Heart right ventricle (tissue), 16 donors: ENCODE measurements at regions of chr3 and their contacts with region 1.

Region 1: DNA sequence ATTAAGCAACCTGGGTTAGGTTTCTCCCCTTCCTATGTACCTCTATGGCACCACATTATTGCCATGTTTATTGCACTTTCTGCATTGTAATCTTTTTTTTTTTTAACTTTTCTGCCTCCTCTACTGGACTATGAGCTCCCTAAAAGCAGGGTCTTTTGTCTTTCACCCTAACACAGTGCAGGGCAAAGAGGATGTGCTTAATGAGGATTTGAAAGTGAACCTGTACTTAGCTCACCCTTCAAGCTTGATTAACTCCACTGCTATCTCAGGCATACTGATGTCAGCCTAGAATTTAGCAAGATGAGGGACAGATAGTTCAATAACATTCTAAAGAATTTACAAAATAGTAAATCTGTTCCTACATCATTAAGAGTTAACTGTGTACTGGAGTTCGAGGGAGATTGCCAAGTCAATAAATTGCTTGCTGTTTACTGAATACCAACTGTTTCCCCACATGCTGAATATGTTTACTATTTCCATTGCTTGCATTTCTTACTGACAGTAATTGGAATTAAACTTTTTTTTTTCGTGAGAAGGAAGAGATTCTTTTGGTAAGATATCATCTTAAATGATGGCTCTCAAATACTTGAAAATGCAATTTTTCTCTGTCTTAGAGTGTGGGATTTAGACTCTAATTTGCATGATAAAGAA is 15.7 kb upstream of the PPARG start:
- DNase-seq: no peak
- ATAC-seq: no peak
- H3K4me3 ChIP-seq: no peak overlapping the region
- H3K27ac ChIP-seq: no peak overlapping the region
- H3K4me1 ChIP-seq: peaks cover 0 to 12% (median 0%) of the 10 kb centered on the region in 9 donors
- H3K27me3 ChIP-seq: no peaks in the 10 kb centered on the region
- CTCF ChIP-seq: no peak

Region 2: GRCh38 chr3:12073106-12073505 is 200.1 kb before region 1 on chr3:
- intact Hi-C with region 1: no loop called
- DNase-seq: no peak
- ATAC-seq: no peak
- H3K4me3 ChIP-seq: no peak overlapping the region
- H3K27ac ChIP-seq: no peak overlapping the region
- H3K4me1 ChIP-seq: no peaks in the 10 kb centered on the region
- H3K27me3 ChIP-seq: peaks cover 0 to 9% (median 0%) of the 10 kb centered on the region in 7 donors
- CTCF ChIP-seq: no peak

Region 3: GRCh38 chr3:12175844-12176453 is 97.2 kb before region 1 on chr3:
- intact Hi-C with region 1: loop called in 1 of 10 experiments (anchors 5 kb)
- DNase-seq: peak; percentile 55 to 70
- ATAC-seq: peak; percentile 67 to 86 (median 82)
- H3K4me3 ChIP-seq: no peak overlapping the region
- H3K27ac ChIP-seq: no peak overlapping the region
- H3K4me1 ChIP-seq: peaks cover 0 to 58% (median 45%) of the 10 kb centered on the region in 9 donors
- H3K27me3 ChIP-seq: no peaks in the 10 kb centered on the region
- CTCF ChIP-seq: peak; percentile 77 to 95 (median 92)